ENCODE measurements at regions of chr11 and their contacts with region 1.

Region 1: DNA sequence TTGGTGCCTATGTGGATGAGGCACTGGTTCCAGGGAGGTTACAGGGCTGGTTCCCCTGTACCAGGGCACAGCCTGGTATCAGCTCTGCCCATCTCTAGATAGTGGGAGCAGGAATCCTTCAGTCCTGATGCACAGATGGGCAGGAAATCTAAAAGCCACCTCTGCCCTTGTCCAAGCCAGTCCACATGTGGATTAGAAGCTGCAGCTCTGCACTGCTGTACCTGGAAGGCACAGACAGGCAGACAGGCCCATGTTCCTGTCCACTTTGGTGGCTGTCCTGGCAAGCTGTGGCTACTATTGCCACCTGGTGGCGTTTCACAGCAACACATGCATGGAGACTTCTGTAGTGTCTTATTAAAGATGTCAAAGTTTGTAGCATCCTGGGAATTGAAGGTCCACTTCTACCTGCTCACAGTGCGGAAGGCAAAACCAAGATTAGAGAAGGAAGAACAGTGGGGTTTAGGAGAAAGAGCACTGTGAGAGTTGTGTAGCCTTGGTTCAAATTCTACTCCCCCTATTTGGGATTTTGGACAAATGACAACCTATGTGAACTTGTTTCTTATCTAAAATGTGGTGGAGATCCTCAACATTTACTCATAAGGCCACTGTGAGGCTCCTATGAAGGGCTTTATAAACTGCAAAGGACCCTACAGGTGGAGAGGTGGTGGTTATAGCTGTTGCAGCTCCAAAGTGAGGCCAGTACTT is 30.1 kb downstream of the NAV2 start:
- DNase-seq: peak; percentile 63 to 71 (median 66)
- H3K4me3 ChIP-seq: no peak overlapping the region
- H3K4me3 Mint-ChIP-seq: no peak overlapping the region
- H3K27ac ChIP-seq: no peak overlapping the region
- H3K27ac Mint-ChIP-seq: no peak overlapping the region
- H3K4me1 ChIP-seq: no peaks in the 10 kb centered on the region
- H3K4me1 Mint-ChIP-seq: peaks cover 0 to 1% (median 0%) of the 10 kb centered on the region in 4 donors
- H3K27me3 ChIP-seq: no peaks in the 10 kb centered on the region
- H3K27me3 Mint-ChIP-seq: no peaks in the 10 kb centered on the region

Region 2: DNA sequence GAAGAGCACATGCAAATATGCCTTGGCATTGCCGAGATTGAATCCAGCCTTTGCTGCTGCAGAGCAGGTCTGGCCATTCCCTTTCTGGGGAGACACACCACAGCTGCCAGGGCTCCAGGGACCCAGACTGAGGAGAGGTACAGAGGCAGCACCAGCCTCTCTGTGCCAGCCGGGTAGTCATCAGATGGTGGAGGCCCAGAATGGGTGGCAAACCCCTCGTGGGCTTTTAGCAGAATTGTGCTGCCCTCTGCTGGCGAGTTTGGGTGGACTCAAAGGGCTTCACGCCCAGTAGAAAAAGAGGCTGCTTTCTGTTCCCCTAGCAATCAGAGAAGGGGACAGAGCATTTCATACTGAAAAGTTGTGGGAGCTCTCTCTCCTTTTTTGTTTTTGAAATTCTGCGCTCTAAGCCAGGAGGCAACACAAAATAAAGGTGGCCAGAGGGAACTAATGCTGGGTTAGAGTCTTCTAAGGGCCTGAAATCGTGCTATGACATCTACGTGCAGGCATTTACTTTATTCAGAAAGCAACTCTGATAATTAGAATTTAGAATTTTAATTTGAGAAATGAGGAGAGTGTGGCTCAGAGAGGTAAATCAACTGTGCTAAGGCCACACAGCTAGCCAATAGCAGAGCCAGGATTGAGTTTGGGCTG is 188.9 kb before region 1 on chr11:
- CTCF ChIA-PET with region 1: interaction called, 92 read pairs
- POLR2A ChIA-PET with region 1: no interaction called
- intact Hi-C with region 1: no loop called
- DNase-seq: peak; percentile 35 to 51 (median 43)
- H3K4me3 ChIP-seq: no peak overlapping the region
- H3K4me3 Mint-ChIP-seq: no peak overlapping the region
- H3K27ac ChIP-seq: no peak overlapping the region
- H3K27ac Mint-ChIP-seq: no peak overlapping the region
- H3K4me1 ChIP-seq: no peaks in the 10 kb centered on the region
- H3K4me1 Mint-ChIP-seq: peaks cover 0 to 4% (median 2%) of the 10 kb centered on the region in 4 donors
- H3K27me3 ChIP-seq: no peaks in the 10 kb centered on the region
- H3K27me3 Mint-ChIP-seq: peaks cover 4 to 13% of the 10 kb centered on the region in 2 donors

Region 3: DNA sequence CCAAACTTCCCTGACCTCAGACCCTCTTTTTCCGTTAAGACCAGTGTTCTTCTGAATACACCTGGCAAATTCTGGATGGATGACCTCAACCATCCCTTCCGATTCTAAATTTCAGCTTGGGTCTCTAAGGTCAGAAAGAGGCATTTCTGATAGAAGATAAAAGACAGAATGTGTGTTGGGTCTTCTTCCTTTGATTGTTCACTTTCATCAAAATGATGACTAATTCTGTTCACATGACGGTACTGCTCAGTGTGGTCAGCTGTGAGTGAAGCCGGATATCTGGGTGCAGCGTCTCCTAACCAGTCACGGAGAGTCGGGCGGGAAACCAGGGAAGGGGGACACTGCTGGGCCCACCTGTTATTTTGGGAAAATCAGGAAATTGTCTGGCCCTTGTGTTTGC is 181.7 kb before region 1 on chr11:
- CTCF ChIA-PET with region 1: interaction called, 203 read pairs
- POLR2A ChIA-PET with region 1: interaction called, 6 read pairs
- intact Hi-C with region 1: loop called (anchors 1 kb)
- DNase-seq: no peak
- H3K4me3 ChIP-seq: no peak overlapping the region
- H3K4me3 Mint-ChIP-seq: no peak overlapping the region
- H3K27ac ChIP-seq: no peak overlapping the region
- H3K27ac Mint-ChIP-seq: no peak overlapping the region
- H3K4me1 ChIP-seq: no peaks in the 10 kb centered on the region
- H3K4me1 Mint-ChIP-seq: peaks cover 0 to 4% (median 2%) of the 10 kb centered on the region in 4 donors
- H3K27me3 ChIP-seq: no peaks in the 10 kb centered on the region
- H3K27me3 Mint-ChIP-seq: peaks cover 2 to 18% of the 10 kb centered on the region in 2 donors

Region 4: GRCh38 chr11:19566583-19567379 is 176.0 kb before region 1 on chr11:
- CTCF ChIA-PET with region 1: interaction called, 203 read pairs
- POLR2A ChIA-PET with region 1: interaction called, 6 read pairs
- intact Hi-C with region 1: loop called (anchors 1 kb)
- DNase-seq: no peak
- H3K4me3 ChIP-seq: no peak overlapping the region
- H3K4me3 Mint-ChIP-seq: no peak overlapping the region
- H3K27ac ChIP-seq: no peak overlapping the region
- H3K27ac Mint-ChIP-seq: no peak overlapping the region
- H3K4me1 ChIP-seq: no peaks in the 10 kb centered on the region
- H3K4me1 Mint-ChIP-seq: no peaks in the 10 kb centered on the region
- H3K27me3 ChIP-seq: no peaks in the 10 kb centered on the region
- H3K27me3 Mint-ChIP-seq: peaks cover 5 to 17% of the 10 kb centered on the region in 2 donors

Region 5: DNA sequence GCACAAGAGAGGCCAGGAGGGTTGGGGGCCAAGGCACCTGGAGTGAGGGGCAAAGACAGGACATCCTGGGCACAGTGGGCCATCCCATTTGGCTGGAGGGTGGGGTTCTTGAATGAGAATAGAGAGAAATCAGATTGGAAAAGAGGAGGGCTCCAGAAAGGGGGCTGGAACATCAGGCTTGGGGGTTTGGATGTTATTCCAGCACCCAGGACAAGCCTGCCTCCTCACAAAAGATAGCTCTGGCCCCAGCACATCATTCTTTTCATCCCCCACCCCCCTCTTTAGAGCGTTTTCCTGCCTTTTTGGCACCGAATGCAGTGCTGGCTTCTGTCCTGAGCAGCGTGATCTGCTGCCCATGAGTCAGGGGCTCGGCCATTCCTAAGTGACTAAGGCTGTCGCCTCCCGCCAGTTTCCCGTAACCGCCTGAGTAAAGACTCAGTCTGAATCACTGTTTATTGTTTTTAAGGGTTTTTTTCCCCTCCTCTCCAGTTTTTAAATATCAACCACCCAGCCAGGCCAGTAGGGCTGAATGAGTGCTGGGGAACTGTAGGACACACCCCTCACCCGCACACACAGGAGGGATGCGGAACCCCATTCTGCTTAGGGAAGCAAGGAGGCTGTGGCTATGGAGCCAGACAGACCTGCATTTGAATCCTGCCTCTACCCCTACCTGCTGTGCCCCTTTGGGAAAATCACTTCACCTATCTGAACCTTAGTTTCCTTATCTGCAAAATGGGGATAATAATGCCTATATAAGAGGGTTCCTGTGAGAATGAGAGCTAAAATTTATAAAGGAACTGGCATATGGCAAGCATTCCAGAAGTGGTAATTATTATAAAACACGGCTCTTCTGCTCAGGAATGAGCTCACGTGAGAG is 62.5 kb before region 1 on chr11:
- CTCF ChIA-PET with region 1: no interaction called
- POLR2A ChIA-PET with region 1: no interaction called
- intact Hi-C with region 1: no loop called
- DNase-seq: no peak
- H3K4me3 ChIP-seq: no peak overlapping the region
- H3K4me3 Mint-ChIP-seq: no peak overlapping the region
- H3K27ac ChIP-seq: no peak overlapping the region
- H3K27ac Mint-ChIP-seq: no peak overlapping the region
- H3K4me1 ChIP-seq: no peaks in the 10 kb centered on the region
- H3K4me1 Mint-ChIP-seq: peaks cover 0 to under 1% (median 0%) of the 10 kb centered on the region in 4 donors
- H3K27me3 ChIP-seq: no peaks in the 10 kb centered on the region
- H3K27me3 Mint-ChIP-seq: peaks cover 2 to 4% of the 10 kb centered on the region in 2 donors

Region 6: DNA sequence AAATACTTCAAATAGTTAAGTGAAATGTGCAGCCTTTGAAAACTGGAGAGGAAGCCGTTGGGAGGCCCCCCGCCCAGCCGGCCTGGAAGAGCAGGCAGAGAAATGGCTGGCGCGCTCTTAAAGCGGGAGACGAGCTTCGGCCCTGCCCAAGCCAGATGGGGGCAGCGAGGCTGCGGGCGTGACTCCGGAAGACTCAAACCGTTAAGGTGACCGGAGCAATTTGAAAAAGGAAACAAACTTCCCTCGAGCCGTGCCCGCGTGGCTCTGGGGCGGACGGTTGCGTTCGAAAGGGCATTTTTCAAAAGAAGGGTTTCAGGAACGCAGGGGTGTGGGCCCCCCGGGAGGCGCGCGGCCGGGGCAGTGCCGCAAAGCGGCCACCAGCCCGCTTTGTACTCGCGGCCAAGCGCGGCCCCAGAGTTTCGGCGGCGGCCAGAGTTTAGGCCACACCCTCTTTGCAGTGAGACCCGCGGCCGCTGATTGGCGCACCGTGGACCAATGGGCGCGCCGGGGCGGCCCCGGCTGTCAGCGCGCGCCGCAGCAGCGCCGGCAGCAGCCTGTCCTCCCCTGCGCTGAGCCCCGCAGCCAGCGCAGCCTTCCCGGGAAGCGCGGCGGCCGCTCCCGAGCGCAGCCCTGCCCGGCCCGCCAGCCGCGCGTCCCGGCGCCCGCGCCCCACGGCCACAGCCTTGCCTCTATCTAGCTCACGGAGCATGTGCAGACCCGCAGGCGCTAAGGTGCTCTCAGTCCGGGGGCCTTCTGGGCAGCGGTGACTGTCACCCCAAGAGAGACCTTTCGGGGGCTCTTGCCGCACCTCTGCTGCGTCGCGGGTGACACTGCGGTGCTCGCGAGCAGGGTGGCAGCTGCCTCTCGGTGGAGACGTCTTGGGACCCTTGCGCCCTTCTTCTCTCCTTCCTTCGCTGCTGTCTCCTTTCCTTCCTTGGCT is 30.2 kb before region 1 on chr11 and contains the start of gene NAV2:
- CTCF ChIA-PET with region 1: interaction called, 10 read pairs
- POLR2A ChIA-PET with region 1: interaction called, 3 read pairs
- intact Hi-C with region 1: no loop called
- DNase-seq: peak; percentile 70 to 81 (median 74)
- H3K4me3 ChIP-seq: peak within 1 kb of the TSS; percentile 63 to 67
- H3K4me3 Mint-ChIP-seq: peak within 1 kb of the TSS; percentile 92 to 99 (median 96)
- H3K27ac ChIP-seq: peak within 1 kb of the TSS; percentile 47
- H3K27ac Mint-ChIP-seq: peak within 1 kb of the TSS; percentile 82 to 97 (median 94)
- H3K4me1 ChIP-seq: peaks cover 20% of the 10 kb centered on the region
- H3K4me1 Mint-ChIP-seq: peaks cover 14 to 45% (median 29%) of the 10 kb centered on the region in 4 donors
- H3K27me3 ChIP-seq: peaks cover 23% of the 10 kb centered on the region
- H3K27me3 Mint-ChIP-seq: peaks cover 12 to 18% of the 10 kb centered on the region in 2 donors
- total RNA-seq, gene NAV2: 4.2 to 6.2 TPM

Region 7: GRCh38 chr11:19723572-19724342 is 19.0 kb before region 1 on chr11:
- CTCF ChIA-PET with region 1: interaction called, 14 read pairs
- POLR2A ChIA-PET with region 1: interaction called, 6 read pairs
- intact Hi-C with region 1: no loop called
- DNase-seq: peak; percentile 56 to 81 (median 66)
- H3K4me3 ChIP-seq: no peak overlapping the region
- H3K4me3 Mint-ChIP-seq: peak overlapping the region in 7 of 8 donors; percentile 18 to 83 (median 62)
- H3K27ac ChIP-seq: peak overlapping the region; percentile 30
- H3K27ac Mint-ChIP-seq: peak overlapping the region; percentile 90 to 98 (median 94)
- H3K4me1 ChIP-seq: peaks cover 31% of the 10 kb centered on the region
- H3K4me1 Mint-ChIP-seq: peaks cover 29 to 59% (median 35%) of the 10 kb centered on the region in 4 donors
- H3K27me3 ChIP-seq: no peaks in the 10 kb centered on the region
- H3K27me3 Mint-ChIP-seq: no peaks in the 10 kb centered on the region

Region 8: GRCh38 chr11:19903620-19904069 is 160.9 kb after region 1 on chr11:
- CTCF ChIA-PET with region 1: no interaction called
- POLR2A ChIA-PET with region 1: no interaction called
- intact Hi-C with region 1: loop called (anchors 1 kb)
- DNase-seq: peak in 4 of 5 donors; percentile 8 to 27 (median 19)
- H3K4me3 ChIP-seq: no peak overlapping the region
- H3K4me3 Mint-ChIP-seq: no peak overlapping the region
- H3K27ac ChIP-seq: no peak overlapping the region
- H3K27ac Mint-ChIP-seq: no peak overlapping the region
- H3K4me1 ChIP-seq: no peaks in the 10 kb centered on the region
- H3K4me1 Mint-ChIP-seq: no peaks in the 10 kb centered on the region
- H3K27me3 ChIP-seq: no peaks in the 10 kb centered on the region
- H3K27me3 Mint-ChIP-seq: peaks cover 0 to 2% of the 10 kb centered on the region in 2 donors

Region 9: GRCh38 chr11:19919050-19919561 is 176.4 kb after region 1 on chr11:
- CTCF ChIA-PET with region 1: no interaction called
- POLR2A ChIA-PET with region 1: no interaction called
- intact Hi-C with region 1: no loop called
- DNase-seq: no peak
- H3K4me3 ChIP-seq: peak overlapping the region in 1 of 2 donors; percentile 11
- H3K4me3 Mint-ChIP-seq: no peak overlapping the region
- H3K27ac ChIP-seq: no peak overlapping the region
- H3K27ac Mint-ChIP-seq: no peak overlapping the region
- H3K4me1 ChIP-seq: no peaks in the 10 kb centered on the region
- H3K4me1 Mint-ChIP-seq: no peaks in the 10 kb centered on the region
- H3K27me3 ChIP-seq: no peaks in the 10 kb centered on the region
- H3K27me3 Mint-ChIP-seq: peaks cover 2 to 8% of the 10 kb centered on the region in 2 donors

Measured in CD4-positive, alpha-beta memory T cell (primary cell).